ENCODE measurements at regions of chr2 and their contacts with region 1.

Region 1: GRCh38 chr2:233470011-233470687 is 96.4 kb downstream of the USP40 start:
- DNase-seq: peak; percentile 39
- H3K4me3 ChIP-seq: no peak overlapping the region
- H3K27ac ChIP-seq: peak overlapping the region; percentile 50 to 74 (median 64)
- H3K4me1 ChIP-seq: peaks cover 0 to 6% (median 4%) of the 10 kb centered on the region in 4 donors
- H3K27me3 ChIP-seq: no peaks in the 10 kb centered on the region
- CTCF ChIP-seq: no peak
- EP300 ChIP-seq: no peak
- POLR2A ChIP-seq: no peak

Region 2: GRCh38 chr2:233711312-233712008 is 241.3 kb after region 1 on chr2:
- in situ Hi-C with region 1: loop called in 1 of 4 experiments (anchors 25 kb)
- intact Hi-C with region 1: no loop called
- DNase-seq: peak; percentile 87
- H3K4me3 ChIP-seq: no peak overlapping the region
- H3K27ac ChIP-seq: no peak overlapping the region
- H3K4me1 ChIP-seq: peaks cover 0 to 4% (median 1%) of the 10 kb centered on the region in 4 donors
- H3K27me3 ChIP-seq: no peaks in the 10 kb centered on the region
- CTCF ChIP-seq: peak; percentile 79 to 88 (median 84)
- EP300 ChIP-seq: no peak
- POLR2A ChIP-seq: no peak

Region 3: GRCh38 chr2:233832869-233833311 is 362.7 kb after region 1 on chr2:
- in situ Hi-C with region 1: loop called in 1 of 4 experiments (anchors 25 kb)
- intact Hi-C with region 1: no loop called
- DNase-seq: peak; percentile 18
- H3K4me3 ChIP-seq: no peak overlapping the region
- H3K27ac ChIP-seq: no peak overlapping the region
- H3K4me1 ChIP-seq: no peaks in the 10 kb centered on the region
- H3K27me3 ChIP-seq: no peaks in the 10 kb centered on the region
- CTCF ChIP-seq: peak in 4 of 5 experiments; percentile 19 to 38 (median 26)
- EP300 ChIP-seq: no peak
- POLR2A ChIP-seq: no peak